ENCODE measurements at regions of chr9 and their contacts with region 1.

Region 1: DNA sequence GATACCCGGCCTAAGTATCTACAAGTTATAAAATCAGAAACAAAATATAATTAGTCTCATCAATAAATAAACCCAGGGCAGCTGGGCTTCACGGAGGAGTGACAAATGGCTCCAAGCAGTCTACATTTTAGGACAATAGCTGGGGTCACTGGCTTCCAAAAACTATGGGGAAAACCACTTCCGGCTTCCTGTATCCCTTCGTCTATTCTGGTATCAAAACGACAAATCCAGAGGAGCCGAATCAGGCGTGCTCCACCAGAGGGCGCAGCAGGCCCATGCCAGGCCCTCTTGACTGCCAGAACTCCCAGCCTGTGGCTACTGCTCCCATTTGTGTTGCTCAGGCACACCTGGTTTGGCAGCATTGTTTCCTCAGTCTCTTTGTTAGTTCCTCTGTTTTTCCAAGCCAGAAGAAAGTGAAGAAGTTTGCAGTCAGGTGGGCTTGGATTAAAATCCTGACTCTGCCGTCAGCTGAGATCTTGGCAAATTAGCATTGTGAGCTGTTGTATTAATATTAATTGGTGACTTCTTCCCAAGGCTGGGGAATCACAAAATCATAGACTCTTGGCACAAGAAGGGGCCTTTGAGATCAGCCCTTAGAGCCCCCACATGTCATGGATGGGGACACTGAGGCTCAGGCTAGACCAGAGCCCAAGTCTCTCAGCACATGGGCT is 11.6 kb upstream of the RAB14 start:
- DNase-seq: peak; percentile 77
- H3K4me3 ChIP-seq: no peak overlapping the region
- H3K27ac ChIP-seq: no peak overlapping the region
- H3K27me3 ChIP-seq: no peaks in the 10 kb centered on the region
- CTCF ChIP-seq: peak; percentile 99

Region 2: DNA sequence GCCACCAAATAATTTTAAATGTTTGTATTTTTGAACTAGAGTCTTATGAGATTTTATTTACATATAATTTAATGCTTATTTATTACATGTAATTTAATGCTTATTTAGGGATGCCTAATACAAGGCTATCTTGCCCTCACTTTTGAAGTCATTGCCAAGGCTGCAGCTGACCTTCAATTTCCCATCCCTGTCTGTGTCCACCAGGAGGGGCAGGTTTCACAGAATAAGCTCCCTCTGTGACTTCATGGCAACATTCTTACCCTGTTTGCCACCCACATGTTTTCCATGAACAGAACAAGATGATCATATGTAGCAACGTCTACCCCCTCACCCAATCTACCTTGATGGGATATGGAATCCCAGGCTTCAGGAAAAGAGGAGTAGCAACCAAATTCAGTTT is 190.2 kb before region 1 on chr9:
- CTCF ChIA-PET with region 1: no interaction called
- POLR2A ChIA-PET with region 1: no interaction called
- DNase-seq: no peak
- H3K4me3 ChIP-seq: no peak overlapping the region
- H3K27ac ChIP-seq: no peak overlapping the region
- H3K27me3 ChIP-seq: no peaks in the 10 kb centered on the region
- CTCF ChIP-seq: no peak

Region 3: DNA sequence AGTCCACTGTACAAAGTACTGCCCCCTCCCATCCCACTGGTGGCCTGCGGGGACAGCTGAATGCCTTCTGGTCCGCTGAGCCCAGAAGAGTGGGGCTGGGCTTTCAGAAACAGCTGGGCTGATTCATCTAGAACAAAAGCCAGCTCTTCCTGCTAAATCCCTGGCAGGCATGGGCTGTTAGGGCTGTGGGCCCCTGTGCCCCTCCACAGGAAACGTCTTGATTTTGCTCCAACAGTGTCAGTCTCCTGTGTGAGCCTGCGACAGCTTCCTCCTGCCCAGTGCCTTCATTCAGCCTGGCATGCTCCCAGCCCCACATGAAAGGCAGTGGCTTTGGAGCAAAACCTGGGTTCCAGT is 47.8 kb after region 1 on chr9:
- CTCF ChIA-PET with region 1: interaction called, 11 read pairs
- POLR2A ChIA-PET with region 1: no interaction called
- DNase-seq: no peak
- H3K4me3 ChIP-seq: no peak overlapping the region
- H3K27ac ChIP-seq: no peak overlapping the region
- H3K27me3 ChIP-seq: peaks cover 2% of the 10 kb centered on the region
- CTCF ChIP-seq: no peak

Region 4: GRCh38 chr9:121278535-121279261 is 65.4 kb after region 1 on chr9:
- CTCF ChIA-PET with region 1: interaction called, 41 read pairs
- POLR2A ChIA-PET with region 1: no interaction called
- DNase-seq: peak; percentile 97
- H3K4me3 ChIP-seq: peak overlapping the region; percentile 35
- H3K27ac ChIP-seq: peak overlapping the region; percentile 96
- H3K27me3 ChIP-seq: no peaks in the 10 kb centered on the region
- CTCF ChIP-seq: peak; percentile 79

Region 5: GRCh38 chr9:121313458-121314152 is 100.3 kb after region 1 on chr9:
- CTCF ChIA-PET with region 1: interaction called, 60 read pairs
- POLR2A ChIA-PET with region 1: interaction called, 3 read pairs
- DNase-seq: no peak
- H3K4me3 ChIP-seq: no peak overlapping the region
- H3K27ac ChIP-seq: no peak overlapping the region
- H3K27me3 ChIP-seq: no peaks in the 10 kb centered on the region
- CTCF ChIP-seq: no peak

Region 6: GRCh38 chr9:121399883-121400607 is 186.8 kb after region 1 on chr9:
- CTCF ChIA-PET with region 1: interaction called, 114 read pairs
- POLR2A ChIA-PET with region 1: no interaction called
- DNase-seq: peak; percentile 53
- H3K4me3 ChIP-seq: no peak overlapping the region
- H3K27ac ChIP-seq: no peak overlapping the region
- H3K27me3 ChIP-seq: no peaks in the 10 kb centered on the region
- CTCF ChIP-seq: peak; percentile 61